PC-3 (cell line): ENCODE measurements at regions of chr3 and their contacts with region 1.

Region 1: GRCh38 chr3:184077881-184078280 is 19.0 kb upstream of the HTR3E start:
- DNase-seq: no peak
- ATAC-seq: no peak
- H3K4me3 ChIP-seq: no peak overlapping the region
- H3K27ac ChIP-seq: no peak overlapping the region
- H3K4me1 ChIP-seq: no peaks in the 10 kb centered on the region
- H3K27me3 ChIP-seq: no peaks in the 10 kb centered on the region
- CTCF ChIP-seq: no peak

Region 2: DNA sequence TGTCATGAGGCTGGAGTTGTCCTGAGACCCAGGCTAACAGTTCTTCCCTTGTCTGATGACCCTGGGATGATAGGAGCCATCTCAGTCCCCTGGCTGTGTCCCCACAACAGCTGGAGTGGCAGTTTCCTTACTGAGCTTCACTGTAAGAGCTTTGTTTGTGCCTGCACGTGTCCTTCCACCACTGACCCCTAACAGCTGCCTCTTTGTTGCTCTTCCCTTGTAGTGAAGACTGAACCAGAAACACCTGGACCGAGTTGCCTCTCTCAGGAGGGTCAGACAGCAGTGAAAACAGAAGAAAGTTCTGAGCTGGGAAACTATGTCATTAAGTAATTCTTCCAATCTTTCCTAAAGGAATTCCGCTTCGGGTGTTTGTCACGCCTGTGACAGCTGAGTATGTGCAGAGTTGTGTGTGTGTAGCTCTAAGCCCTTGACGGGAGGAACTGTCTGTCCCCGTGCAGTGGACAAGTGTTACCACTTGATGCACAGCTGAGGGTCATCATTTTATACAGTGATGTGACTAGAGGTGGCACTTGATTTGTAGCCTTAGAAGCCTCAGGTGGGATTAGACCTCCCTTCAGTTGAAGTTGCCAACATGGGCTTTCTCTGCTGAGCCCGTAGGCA is 277.5 kb before region 1 on chr3:
- CTCF ChIA-PET with region 1: no interaction called
- POLR2A ChIA-PET with region 1: no interaction called
- intact Hi-C with region 1: no loop called
- DNase-seq: no peak
- ATAC-seq: no peak
- H3K4me3 ChIP-seq: no peak overlapping the region
- H3K27ac ChIP-seq: no peak overlapping the region
- H3K4me1 ChIP-seq: no peaks in the 10 kb centered on the region
- H3K27me3 ChIP-seq: no peaks in the 10 kb centered on the region
- CTCF ChIP-seq: no peak

Region 3: GRCh38 chr3:184110316-184110725 is 32.4 kb after region 1 on chr3:
- CTCF ChIA-PET with region 1: no interaction called
- POLR2A ChIA-PET with region 1: interaction called, 16 read pairs
- intact Hi-C with region 1: no loop called
- DNase-seq: peak; percentile 89
- ATAC-seq: peak; percentile 91
- H3K4me3 ChIP-seq: peak overlapping the region; percentile 54
- H3K27ac ChIP-seq: peak overlapping the region; percentile 40
- H3K4me1 ChIP-seq: peaks cover 9% of the 10 kb centered on the region
- H3K27me3 ChIP-seq: no peaks in the 10 kb centered on the region
- CTCF ChIP-seq: no peak

Region 4: GRCh38 chr3:184250167-184250828 is 172.4 kb after region 1 on chr3:
- CTCF ChIA-PET with region 1: no interaction called
- POLR2A ChIA-PET with region 1: no interaction called
- intact Hi-C with region 1: no loop called
- DNase-seq: peak; percentile 98
- ATAC-seq: peak; percentile 68
- H3K4me3 ChIP-seq: peak overlapping the region; percentile 96
- H3K27ac ChIP-seq: peak overlapping the region; percentile 63
- H3K4me1 ChIP-seq: peaks cover 2% of the 10 kb centered on the region; the same call in 1 of the 2 replicates
- H3K27me3 ChIP-seq: no peaks in the 10 kb centered on the region
- CTCF ChIP-seq: peak; percentile 96